ENCODE measurements at regions of chr7 and their contacts with region 1.

Region 1: DNA sequence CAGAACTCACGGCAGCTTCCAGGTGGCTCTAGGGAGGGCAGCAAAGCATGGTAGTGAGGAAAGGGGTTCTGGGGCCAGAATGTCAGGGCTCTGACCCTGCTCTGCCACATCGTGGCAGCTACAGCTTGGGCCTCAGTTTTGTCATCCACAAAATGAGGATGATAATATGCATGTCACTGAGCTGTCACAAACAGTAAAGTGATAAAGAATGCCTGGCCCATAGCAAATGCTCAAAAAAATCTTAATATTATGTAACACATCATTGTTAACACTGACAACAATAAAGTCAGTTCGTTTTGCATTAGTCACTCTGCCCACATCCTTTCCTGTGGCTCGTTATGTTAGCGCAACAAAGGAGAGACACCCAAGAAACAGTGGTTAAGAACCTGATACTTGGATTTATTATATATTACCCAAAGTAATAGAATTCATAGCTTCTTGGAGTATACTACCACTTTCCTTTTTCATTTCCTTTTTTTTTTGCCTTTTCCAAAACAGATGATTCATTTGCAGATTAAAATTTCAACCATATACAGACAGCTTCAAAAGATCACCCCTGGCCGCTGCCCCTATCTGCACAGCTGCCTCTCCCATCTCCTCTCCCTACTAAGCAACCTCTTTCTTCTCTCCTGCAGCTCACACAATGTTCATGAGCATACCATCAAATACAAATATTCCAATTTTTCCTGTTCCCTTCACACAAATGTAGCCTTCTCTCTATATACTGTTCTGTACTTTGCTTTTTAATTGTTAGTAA is 45.5 kb upstream of the DDC start:
- DNase-seq: no peak
- H3K4me3 ChIP-seq: no peak overlapping the region
- H3K27ac ChIP-seq: no peak overlapping the region
- H3K4me1 ChIP-seq: peaks cover 0 to 26% (median 17%) of the 10 kb centered on the region in 4 donors
- H3K27me3 ChIP-seq: no peaks in the 10 kb centered on the region
- CTCF ChIP-seq: no peak
- EP300 ChIP-seq: no peak
- POLR2A ChIP-seq: no peak

Region 2: DNA sequence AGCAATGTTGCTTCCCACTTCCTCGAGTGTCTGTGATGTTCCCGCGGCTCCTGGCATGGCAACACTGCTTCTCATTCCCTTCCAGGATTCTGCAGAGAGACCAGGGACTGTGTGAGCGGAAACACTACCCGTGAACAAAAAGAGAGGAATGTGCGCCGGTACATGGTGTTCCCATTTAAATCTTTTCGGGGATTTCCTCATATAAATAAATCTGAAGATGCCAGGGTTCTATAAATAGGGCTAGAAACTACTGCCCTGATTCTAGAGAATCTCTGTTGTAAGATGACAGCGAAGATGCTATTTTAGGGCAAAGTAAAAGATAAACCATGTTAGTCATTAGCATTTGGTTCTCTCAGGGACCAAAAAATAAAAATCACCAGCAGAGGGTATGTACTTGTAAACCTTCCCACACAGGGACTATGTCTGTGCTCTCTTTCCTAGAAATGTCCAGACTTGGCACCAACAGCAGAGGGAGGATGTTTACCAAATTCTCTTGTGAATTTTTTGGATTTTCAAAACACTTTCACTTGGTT is 46.7 kb after region 1 on chr7:
- intact Hi-C with region 1: loop called (anchors 5 kb)
- DNase-seq: peak; percentile 95
- H3K4me3 ChIP-seq: no peak overlapping the region
- H3K27ac ChIP-seq: peak overlapping the region; percentile 72 to 88 (median 84)
- H3K4me1 ChIP-seq: peaks cover 0 to 73% (median 65%) of the 10 kb centered on the region in 4 donors
- H3K27me3 ChIP-seq: no peaks in the 10 kb centered on the region
- CTCF ChIP-seq: peak in 1 of 4 experiments; percentile 29
- EP300 ChIP-seq: peak; percentile 87 to 99 (median 97)
- POLR2A ChIP-seq: no peak

Region 3: GRCh38 chr7:50679218-50680007 is 68.7 kb after region 1 on chr7:
- intact Hi-C with region 1: loop called (anchors 5 kb)
- DNase-seq: no peak
- H3K4me3 ChIP-seq: no peak overlapping the region
- H3K27ac ChIP-seq: peak overlapping the region in 3 of 4 donors; percentile 76 to 91 (median 87)
- H3K4me1 ChIP-seq: peaks cover 0 to 87% (median 81%) of the 10 kb centered on the region in 4 donors
- H3K27me3 ChIP-seq: no peaks in the 10 kb centered on the region
- CTCF ChIP-seq: peak in 3 of 4 experiments; percentile 28 to 39 (median 36)
- EP300 ChIP-seq: no peak
- POLR2A ChIP-seq: no peak

Region 4: DNA sequence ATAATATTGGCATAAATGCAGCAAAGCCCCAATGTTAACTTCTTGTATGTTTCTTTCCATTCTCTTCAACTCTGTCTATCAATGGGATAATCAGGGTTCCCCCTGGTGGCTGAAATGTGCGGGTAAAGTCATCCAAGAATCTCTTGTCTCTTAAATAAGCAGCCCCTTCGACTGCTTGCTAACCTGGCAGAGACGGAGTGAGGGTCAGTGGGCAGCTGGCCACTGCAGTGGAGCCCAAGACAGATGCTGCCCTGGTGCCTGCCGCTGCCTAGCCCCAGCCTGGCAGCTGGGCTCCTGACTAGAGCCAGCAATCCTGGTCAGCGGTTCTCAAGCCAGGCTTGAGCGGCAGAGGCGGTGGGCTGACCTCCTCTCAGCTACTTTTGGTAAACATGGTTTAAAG is 457.1 kb after region 1 on chr7:
- intact Hi-C with region 1: loop called (anchors 10 kb)
- DNase-seq: peak; percentile 76
- H3K4me3 ChIP-seq: no peak overlapping the region
- H3K27ac ChIP-seq: no peak overlapping the region
- H3K4me1 ChIP-seq: peaks cover 0 to 18% (median 4%) of the 10 kb centered on the region in 4 donors
- H3K27me3 ChIP-seq: no peaks in the 10 kb centered on the region
- CTCF ChIP-seq: peak; percentile 39 to 73 (median 71)
- EP300 ChIP-seq: no peak
- POLR2A ChIP-seq: no peak